ENCODE measurements at regions of chr1 and their contacts with region 1.

Region 1: GRCh38 chr1:231337472-231338269 is at the start of gene EXOC8:
- DNase-seq: peak; percentile 100
- H3K4me3 Mint-ChIP-seq: peak within 1 kb of the TSS; percentile 98
- H3K27ac Mint-ChIP-seq: peak within 1 kb of the TSS; percentile 97
- H3K4me1 Mint-ChIP-seq: peaks cover 49% of the 10 kb centered on the region
- H3K27me3 Mint-ChIP-seq: no peaks in the 10 kb centered on the region
- CTCF ChIP-seq: peak; percentile 18
- total RNA-seq, gene EXOC8: 24.0 and 28.5 TPM in 2 replicates

Region 2: DNA sequence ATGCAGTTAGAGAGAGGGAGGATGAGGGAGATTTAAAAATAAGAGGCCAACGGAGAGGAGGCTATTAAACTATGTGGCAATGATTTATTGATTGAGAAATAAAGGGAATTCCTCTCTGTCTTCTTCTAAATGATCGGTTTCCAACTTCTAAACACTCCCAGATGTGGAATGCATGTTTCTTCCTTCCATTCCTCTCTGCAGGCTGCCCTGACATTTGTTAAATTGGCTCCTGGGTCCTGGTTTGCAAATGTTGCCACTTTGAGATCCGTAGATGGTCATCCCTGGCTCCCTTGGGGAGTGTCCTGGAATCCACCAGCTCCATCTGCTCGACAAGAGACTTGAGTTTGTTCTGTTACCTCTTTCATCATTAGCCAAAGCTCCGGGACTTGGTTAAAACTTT is 459.1 kb before region 1 on chr1:
- CTCF ChIA-PET with region 1: no interaction called
- POLR2A ChIA-PET with region 1: no interaction called
- intact Hi-C with region 1: no loop called
- DNase-seq: peak; percentile 36
- H3K4me3 Mint-ChIP-seq: no peak overlapping the region
- H3K27ac Mint-ChIP-seq: peak overlapping the region; percentile 6
- H3K4me1 Mint-ChIP-seq: peaks cover 10% of the 10 kb centered on the region
- H3K27me3 Mint-ChIP-seq: peaks cover 73% of the 10 kb centered on the region
- CTCF ChIP-seq: no peak

Region 3: DNA sequence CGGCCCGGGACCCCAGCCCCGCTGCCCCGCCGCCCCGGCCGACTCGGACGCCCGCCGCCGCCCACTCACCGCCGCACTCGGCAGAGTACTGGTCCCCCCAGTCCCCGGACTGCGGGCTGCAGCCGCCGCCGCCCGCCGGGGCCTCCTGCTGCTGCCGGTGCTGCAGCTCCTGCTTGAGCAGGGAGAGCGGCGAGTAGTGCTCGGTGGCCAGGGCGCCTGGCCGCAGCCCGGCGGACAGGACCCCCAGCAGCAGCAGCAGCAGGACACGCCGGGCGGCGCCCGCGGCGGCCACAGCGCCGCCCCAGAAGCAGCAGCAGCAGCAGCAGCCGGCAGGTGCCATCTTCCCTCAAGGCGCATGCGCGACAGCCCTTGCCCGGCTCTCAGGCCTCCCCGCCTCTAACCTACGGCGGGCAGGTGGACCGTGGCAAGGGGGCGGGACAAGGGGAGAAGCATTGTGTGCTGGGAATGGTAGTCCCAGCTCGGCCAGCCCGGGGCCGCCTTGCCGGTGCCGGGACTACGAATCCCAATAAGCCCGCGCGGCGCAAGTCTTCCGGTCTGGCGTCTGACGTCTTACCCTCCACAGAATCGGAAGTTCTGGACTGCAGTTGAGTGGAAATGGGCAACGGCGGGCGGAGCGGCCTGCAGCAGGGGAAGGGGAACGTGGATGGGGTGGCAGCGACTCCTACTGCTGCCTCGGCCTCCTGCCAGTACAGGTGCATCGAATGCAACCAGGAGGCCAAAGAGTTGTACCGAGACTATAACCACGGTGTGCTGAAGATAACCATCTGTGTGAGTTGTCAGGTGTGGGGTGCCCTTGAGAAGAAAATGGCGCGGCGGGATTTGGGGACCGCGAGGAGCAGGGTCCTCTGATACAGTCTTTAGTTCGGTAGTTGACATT is 358.9 kb before region 1 on chr1 and contains the starts of genes ARV1 and TTC13:
- CTCF ChIA-PET with region 1: no interaction called
- POLR2A ChIA-PET with region 1: interaction called, 36 read pairs
- intact Hi-C with region 1: no loop called
- DNase-seq: peak; percentile 100
- H3K4me3 Mint-ChIP-seq: no peak within 1 kb of the TSS
- H3K27ac Mint-ChIP-seq: peak within 1 kb of the TSS; percentile 83
- H3K4me1 Mint-ChIP-seq: peaks cover 7% of the 10 kb centered on the region
- H3K27me3 Mint-ChIP-seq: no peaks in the 10 kb centered on the region
- CTCF ChIP-seq: peak; percentile 15
- total RNA-seq, gene ARV1: 41.8 and 51.8 TPM in 2 replicates
- total RNA-seq, gene TTC13: 29.9 and 35.2 TPM in 2 replicates

Region 4: GRCh38 chr1:231278100-231278790 is 59.4 kb before region 1 on chr1:
- CTCF ChIA-PET with region 1: interaction called, 3 read pairs
- POLR2A ChIA-PET with region 1: interaction called, 13 read pairs
- intact Hi-C with region 1: no loop called
- DNase-seq: peak; percentile 51
- H3K4me3 Mint-ChIP-seq: no peak overlapping the region
- H3K27ac Mint-ChIP-seq: peak overlapping the region; percentile 40
- H3K4me1 Mint-ChIP-seq: peaks cover 20% of the 10 kb centered on the region
- H3K27me3 Mint-ChIP-seq: no peaks in the 10 kb centered on the region
- CTCF ChIP-seq: no peak

Region 5: GRCh38 chr1:231357831-231358354 is 20.2 kb after region 1 on chr1:
- CTCF ChIA-PET with region 1: interaction called, 14 read pairs
- POLR2A ChIA-PET with region 1: interaction called, 122 read pairs
- intact Hi-C with region 1: no loop called
- DNase-seq: peak; percentile 88
- H3K4me3 Mint-ChIP-seq: no peak overlapping the region
- H3K27ac Mint-ChIP-seq: no peak overlapping the region
- H3K4me1 Mint-ChIP-seq: peaks cover 17% of the 10 kb centered on the region
- H3K27me3 Mint-ChIP-seq: no peaks in the 10 kb centered on the region
- CTCF ChIP-seq: peak; percentile 96

Region 6: GRCh38 chr1:231383159-231383860 is 45.6 kb after region 1 on chr1:
- CTCF ChIA-PET with region 1: interaction called, 3 read pairs
- POLR2A ChIA-PET with region 1: interaction called, 13 read pairs
- intact Hi-C with region 1: no loop called
- DNase-seq: peak; percentile 85
- H3K4me3 Mint-ChIP-seq: no peak overlapping the region
- H3K27ac Mint-ChIP-seq: no peak overlapping the region
- H3K4me1 Mint-ChIP-seq: peaks cover 15% of the 10 kb centered on the region
- H3K27me3 Mint-ChIP-seq: no peaks in the 10 kb centered on the region
- CTCF ChIP-seq: no peak

Region 7: GRCh38 chr1:231407547-231408396 is 70.1 kb after region 1 on chr1:
- CTCF ChIA-PET with region 1: interaction called, 3 read pairs
- POLR2A ChIA-PET with region 1: interaction called, 97 read pairs
- intact Hi-C with region 1: no loop called
- DNase-seq: peak; percentile 68
- H3K4me3 Mint-ChIP-seq: no peak overlapping the region
- H3K27ac Mint-ChIP-seq: no peak overlapping the region
- H3K4me1 Mint-ChIP-seq: peaks cover 15% of the 10 kb centered on the region
- H3K27me3 Mint-ChIP-seq: no peaks in the 10 kb centered on the region
- CTCF ChIP-seq: no peak

Region 8: DNA sequence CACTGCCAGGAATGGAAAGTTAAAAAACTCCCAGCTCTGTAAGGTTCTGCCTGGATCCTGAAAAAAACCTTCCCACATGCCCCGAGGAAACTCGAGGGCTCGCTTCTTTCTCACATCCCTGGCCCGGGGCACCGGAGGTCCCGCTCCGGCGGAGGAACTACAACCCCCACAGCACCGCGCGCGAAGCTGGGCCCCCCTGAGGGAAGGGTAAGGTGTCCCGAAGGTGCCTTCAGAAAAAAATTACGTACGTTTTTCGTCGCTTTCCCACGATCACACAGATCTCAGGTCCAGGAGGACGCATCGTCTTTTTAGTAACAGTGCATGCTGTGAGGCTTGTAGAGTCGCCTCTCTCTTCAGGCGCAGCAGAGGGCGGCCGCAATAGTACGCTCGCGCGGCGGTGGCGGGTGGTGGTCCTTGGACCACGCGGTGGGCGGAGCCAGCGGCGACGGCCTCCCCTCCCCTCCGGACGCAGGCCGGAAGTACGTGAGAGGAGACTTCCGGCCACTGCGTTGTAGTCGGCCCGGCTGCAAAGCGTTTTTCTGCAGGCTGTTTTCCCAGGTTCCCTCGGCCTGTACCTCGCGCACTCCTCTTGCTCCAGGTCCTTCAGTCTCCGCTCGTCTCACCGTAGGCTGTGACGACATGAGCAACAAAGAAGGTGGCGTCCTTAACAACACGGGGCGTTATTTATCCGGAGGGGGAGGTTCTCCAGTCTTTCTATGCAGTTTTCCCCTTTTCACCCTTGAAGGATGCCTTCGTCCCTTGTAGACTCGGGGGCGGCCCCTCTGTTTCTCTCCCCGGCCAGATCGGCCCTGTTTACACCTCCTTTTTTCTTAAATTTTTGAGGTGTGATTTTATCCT is 190.7 kb after region 1 on chr1 and contains the start of gene TSNAX:
- CTCF ChIA-PET with region 1: interaction called, 4 read pairs
- POLR2A ChIA-PET with region 1: interaction called, 38 read pairs
- intact Hi-C with region 1: loop called (anchors 1 kb)
- DNase-seq: peak; percentile 97
- H3K4me3 Mint-ChIP-seq: peak within 1 kb of the TSS; percentile 97
- H3K27ac Mint-ChIP-seq: peak within 1 kb of the TSS; percentile 98
- H3K4me1 Mint-ChIP-seq: peaks cover 36% of the 10 kb centered on the region
- H3K27me3 Mint-ChIP-seq: no peaks in the 10 kb centered on the region
- CTCF ChIP-seq: no peak
- total RNA-seq, gene TSNAX: 79.0 and 80.2 TPM in 2 replicates

Measured in MCF 10A (cell line).